Activated T-helper 1 cell treated with anti-CD3 and anti-CD28 coated beads, Interleukin-12 subunit alpha, Interleukin-12 subunit beta, Interleukin-2, Interleukin-4 antibody, amounts not matched to agents 30 ng/mL and 10 ng/mL and 1 ng/mL, durations not matched to agents 14 hours and 24 hours and 36 hours (primary cell): ENCODE measurements at regions of chr4 and their contacts with region 1.

Region 1: DNA sequence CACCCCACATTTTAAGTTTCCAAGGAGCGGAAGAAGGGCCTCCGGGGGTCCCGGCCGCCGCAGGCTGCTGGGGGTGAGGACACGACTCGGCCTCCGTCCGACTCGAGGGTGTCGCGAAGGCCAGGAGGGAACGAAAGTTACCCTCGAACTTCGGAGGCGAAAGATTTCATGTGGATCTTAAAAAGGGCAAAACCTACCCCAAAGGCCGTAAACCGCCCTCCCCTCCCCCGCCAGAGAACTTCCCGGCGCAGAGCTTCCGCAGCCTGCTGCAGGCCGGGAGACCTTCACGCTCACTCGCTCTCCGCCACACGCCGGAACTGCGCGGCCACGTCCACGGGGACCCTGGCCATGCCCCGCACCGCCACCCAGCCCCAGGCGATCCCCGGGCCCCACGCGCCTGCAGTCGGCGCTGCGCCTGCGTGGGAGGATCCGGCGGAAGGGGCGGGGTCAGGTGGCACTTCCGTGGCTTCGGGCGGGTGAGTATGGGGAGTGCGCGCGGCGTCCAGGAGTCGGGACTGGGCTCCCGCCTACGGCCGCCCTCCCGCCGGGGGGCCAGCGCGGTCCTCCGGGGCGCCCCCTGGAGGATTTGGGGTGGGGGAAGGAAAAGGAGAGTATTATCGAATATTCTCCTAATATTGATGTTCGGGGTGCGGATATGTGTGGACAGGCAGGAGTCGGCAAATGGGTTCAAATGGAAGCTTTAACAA is at the start of gene MMAA:
- DNase-seq: peak; percentile 95
- H3K4me3 Mint-ChIP-seq: peak within 1 kb of the TSS; percentile 97
- H3K27ac Mint-ChIP-seq: peak within 1 kb of the TSS; percentile 99
- H3K4me1 Mint-ChIP-seq: peaks cover 49% of the 10 kb centered on the region
- H3K27me3 Mint-ChIP-seq: peaks cover 2% of the 10 kb centered on the region
- total RNA-seq, gene MMAA: 18.1 and 20.8 TPM in 2 replicates

Region 2: DNA sequence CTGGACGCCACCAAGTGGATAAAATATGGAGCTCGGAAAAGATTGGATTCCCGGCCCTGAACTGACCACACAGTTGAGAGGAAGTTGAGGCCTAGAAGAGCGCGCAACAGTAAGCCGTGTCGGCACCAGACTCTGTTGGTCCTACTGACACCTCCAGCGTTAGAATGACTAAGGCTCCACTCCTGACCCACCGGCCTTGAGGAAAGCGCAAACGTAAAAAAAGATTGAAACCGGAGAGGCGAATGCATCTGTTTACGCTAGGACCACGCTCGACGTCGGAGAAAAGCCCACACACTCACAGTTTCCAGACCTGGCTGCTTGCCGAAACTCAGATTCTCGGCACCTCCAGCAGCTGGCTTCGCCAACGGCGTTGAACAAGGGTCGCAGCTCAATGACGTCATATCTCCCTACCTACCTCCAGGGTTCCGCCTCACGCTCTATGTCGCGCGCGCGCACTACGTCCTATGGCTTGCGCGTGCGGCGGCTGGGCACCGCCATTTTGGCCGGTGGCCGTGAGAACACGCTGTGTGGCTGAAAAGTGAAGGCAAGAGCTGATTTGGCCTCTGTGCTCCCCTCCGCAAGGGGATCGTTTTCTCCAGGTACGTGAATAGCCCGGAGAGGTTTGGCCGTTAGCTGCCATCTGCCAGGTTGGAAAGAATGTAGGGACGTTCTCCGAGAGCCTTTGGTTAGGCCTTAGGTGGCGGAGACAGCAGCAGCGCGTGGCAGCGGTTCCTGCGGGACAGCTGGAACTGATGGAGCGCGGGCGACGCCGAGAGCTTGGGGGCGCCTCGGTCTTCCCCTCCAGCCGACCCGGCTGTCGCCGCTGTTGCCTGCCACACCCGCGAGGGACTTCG is 521.0 kb before region 1 on chr4 and contains the starts of genes ABCE1 and ANAPC10:
- intact Hi-C with region 1: loop called (anchors 1 kb)
- DNase-seq: peak; percentile 94
- H3K4me3 Mint-ChIP-seq: peak within 1 kb of the TSS; percentile 92
- H3K27ac Mint-ChIP-seq: peak within 1 kb of the TSS; percentile 100
- H3K4me1 Mint-ChIP-seq: peaks cover 27% of the 10 kb centered on the region
- H3K27me3 Mint-ChIP-seq: no peaks in the 10 kb centered on the region
- total RNA-seq, gene ABCE1: 155 and 176 TPM in 2 replicates
- total RNA-seq, gene ANAPC10: 25.4 and 32.1 TPM in 2 replicates

Region 3: DNA sequence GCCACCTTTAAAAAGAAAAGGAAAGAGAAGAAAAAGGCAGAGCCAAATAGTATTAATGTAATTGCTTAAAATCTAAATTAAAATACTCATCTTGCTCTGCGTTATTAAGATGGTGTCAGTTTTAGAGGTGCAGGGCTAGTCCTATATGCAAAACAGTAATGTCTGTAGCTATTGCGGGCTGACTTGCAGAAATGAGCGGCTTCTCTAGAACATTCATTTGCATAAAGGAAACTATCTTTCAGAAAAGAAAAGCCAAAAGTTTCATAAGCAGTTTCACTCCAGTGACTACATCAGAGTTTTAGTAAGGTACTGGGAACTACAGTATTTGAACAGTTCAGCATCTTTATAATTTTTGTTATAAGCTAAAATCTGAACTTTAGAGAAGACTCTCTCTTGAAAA is 131.5 kb before region 1 on chr4:
- intact Hi-C with region 1: loop called (anchors 1 kb)
- DNase-seq: no peak
- H3K4me3 Mint-ChIP-seq: no peak overlapping the region
- H3K27ac Mint-ChIP-seq: no peak overlapping the region
- H3K4me1 Mint-ChIP-seq: peaks cover 10% of the 10 kb centered on the region
- H3K27me3 Mint-ChIP-seq: peaks cover 23% of the 10 kb centered on the region

Region 4: GRCh38 chr4:145769450-145770037 is 150.5 kb after region 1 on chr4:
- intact Hi-C with region 1: loop called (anchors 5 kb)
- DNase-seq: no peak
- H3K4me3 Mint-ChIP-seq: no peak overlapping the region
- H3K27ac Mint-ChIP-seq: no peak overlapping the region
- H3K4me1 Mint-ChIP-seq: peaks cover 42% of the 10 kb centered on the region
- H3K27me3 Mint-ChIP-seq: no peaks in the 10 kb centered on the region

Region 5: GRCh38 chr4:145829629-145830395 is 210.7 kb after region 1 on chr4:
- intact Hi-C with region 1: loop called (anchors 1 kb)
- DNase-seq: no peak
- H3K4me3 Mint-ChIP-seq: peak overlapping the region; percentile 63
- H3K27ac Mint-ChIP-seq: peak overlapping the region; percentile 91
- H3K4me1 Mint-ChIP-seq: peaks cover 61% of the 10 kb centered on the region
- H3K27me3 Mint-ChIP-seq: no peaks in the 10 kb centered on the region

Region 6: GRCh38 chr4:146175541-146176453 is 556.7 kb after region 1 on chr4 and contains the start of gene LSM6:
- intact Hi-C with region 1: loop called (anchors 2 kb)
- DNase-seq: peak; percentile 77
- H3K4me3 Mint-ChIP-seq: peak within 1 kb of the TSS; percentile 88
- H3K27ac Mint-ChIP-seq: peak within 1 kb of the TSS; percentile 81
- H3K4me1 Mint-ChIP-seq: peaks cover 40% of the 10 kb centered on the region
- H3K27me3 Mint-ChIP-seq: no peaks in the 10 kb centered on the region
- total RNA-seq, gene LSM6: 62.9 and 65.0 TPM in 2 replicates